ENCODE measurements at regions of chr20 and their contacts with region 1.

Region 1: DNA sequence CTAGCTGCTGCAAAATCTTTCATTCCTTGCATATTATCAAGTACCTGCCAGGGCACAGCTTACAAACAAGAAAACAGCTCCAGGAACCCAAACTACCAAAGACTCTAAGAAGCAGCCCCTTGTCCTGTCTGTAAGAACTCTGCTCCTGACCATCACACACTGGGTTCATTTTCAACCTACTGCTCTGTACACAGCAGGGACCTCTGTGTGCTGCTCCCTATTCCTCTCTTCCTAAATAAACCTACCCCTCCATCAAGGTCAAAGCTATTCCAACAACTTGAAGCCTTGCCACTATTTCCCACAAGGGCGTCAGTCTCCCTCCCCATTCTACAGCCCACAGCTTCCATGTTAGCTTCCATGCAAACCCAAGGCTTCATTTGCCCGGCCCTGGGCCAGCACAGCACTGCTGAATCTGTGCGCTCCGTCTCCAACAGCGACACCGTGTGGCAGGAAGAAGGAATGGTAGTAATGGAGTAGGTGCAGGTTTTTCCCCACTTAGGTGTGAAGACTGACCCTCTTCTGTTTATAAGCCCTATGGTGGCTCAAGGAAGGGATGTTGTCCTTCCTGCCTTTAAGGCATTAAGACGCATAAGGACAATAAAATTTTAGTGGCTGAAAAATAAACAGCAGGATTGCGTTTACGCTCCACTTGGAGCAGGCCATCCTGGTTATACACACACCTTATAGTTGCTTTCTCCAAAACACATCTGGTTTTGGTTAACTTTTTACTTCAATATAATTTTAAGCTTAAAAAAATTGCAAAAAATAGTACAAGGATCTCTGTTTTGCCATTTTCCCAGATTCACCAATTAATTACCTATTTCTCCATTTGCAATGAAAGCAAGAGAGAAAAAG is 115.2 kb upstream of the NXT1 start:
- DNase-seq: peak; percentile 84 to 89
- ATAC-seq: peak; percentile 94
- H3K4me3 ChIP-seq: no peak overlapping the region
- H3K27ac ChIP-seq: no peak overlapping the region
- H3K4me1 ChIP-seq: no peaks in the 10 kb centered on the region
- H3K27me3 ChIP-seq: no peaks in the 10 kb centered on the region

Region 2: GRCh38 chr20:22700367-22700766 is 535.0 kb before region 1 on chr20:
- intact Hi-C with region 1: loop called in 1 of 2 experiments (anchors 5 kb)
- DNase-seq: peak in 1 of 2 donors; percentile 68
- ATAC-seq: peak; percentile 58
- H3K4me3 ChIP-seq: no peak overlapping the region
- H3K27ac ChIP-seq: no peak overlapping the region
- H3K4me1 ChIP-seq: no peaks in the 10 kb centered on the region
- H3K27me3 ChIP-seq: no peaks in the 10 kb centered on the region